WTC11 (cell line): ENCODE measurements at regions of chr14 and their contacts with region 1.

Region 1: GRCh38 chr14:35404449-35405303 is at the start of gene NFKBIA:
- DNase-seq: peak; percentile 82
- ATAC-seq: peak; percentile 73
- H3K4me3 Mint-ChIP-seq: peak within 1 kb of the TSS; percentile 88
- H3K27ac Mint-ChIP-seq: peak within 1 kb of the TSS; percentile 93
- H3K4me1 Mint-ChIP-seq: peaks cover 34% of the 10 kb centered on the region
- H3K27me3 Mint-ChIP-seq: no peaks in the 10 kb centered on the region
- CTCF ChIP-seq: no peak
- total RNA-seq, gene NFKBIA: 29.3 to 32.1 TPM (median 31.3 TPM) in 3 replicates

Region 2: DNA sequence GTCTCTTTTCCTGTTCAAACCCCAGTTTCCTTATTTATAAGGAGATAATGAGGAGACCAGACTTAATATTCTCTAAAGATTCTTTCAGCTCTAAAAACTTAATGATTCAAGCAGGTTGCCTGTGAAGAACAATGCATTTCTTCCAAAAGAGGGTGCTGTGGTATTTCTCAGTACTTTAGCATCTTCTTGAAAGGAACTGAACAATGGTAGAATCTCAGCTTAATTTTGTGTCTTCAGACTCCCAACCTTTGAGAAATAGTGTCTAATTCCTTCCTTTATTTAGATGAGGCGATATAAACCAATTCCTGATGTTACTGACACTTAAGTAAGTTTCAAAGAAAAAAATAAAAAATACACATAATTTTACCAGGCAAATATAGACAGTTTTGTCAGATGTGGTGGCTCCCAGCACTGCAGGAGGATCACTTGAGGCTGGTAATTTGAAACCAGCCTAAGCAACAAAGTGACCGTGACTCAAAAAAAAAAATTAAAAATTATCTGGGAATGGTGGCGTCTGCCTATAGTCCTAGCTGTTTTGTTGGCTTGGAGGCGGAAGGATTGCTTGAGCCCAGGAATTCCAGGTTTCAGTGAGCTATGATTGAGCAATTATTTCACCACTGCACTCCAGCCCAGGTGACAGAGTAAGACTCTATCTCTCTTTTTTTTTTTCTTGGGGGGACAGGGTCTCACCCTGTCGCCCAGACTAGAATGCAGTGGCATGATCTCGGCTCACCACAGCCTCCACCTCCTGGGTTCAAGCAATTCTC is 189.4 kb before region 1 on chr14:
- CTCF ChIA-PET with region 1: interaction called, 10 read pairs
- POLR2A ChIA-PET with region 1: interaction called, 3 read pairs
- DNase-seq: no peak
- ATAC-seq: peak; percentile 66
- H3K4me3 Mint-ChIP-seq: no peak overlapping the region
- H3K27ac Mint-ChIP-seq: peak overlapping the region; percentile 71
- H3K4me1 Mint-ChIP-seq: peaks cover 9% of the 10 kb centered on the region
- H3K27me3 Mint-ChIP-seq: no peaks in the 10 kb centered on the region
- CTCF ChIP-seq: no peak

Region 3: GRCh38 chr14:35292051-35292769 is 112.5 kb before region 1 on chr14 and contains the start of gene PSMA6:
- CTCF ChIA-PET with region 1: interaction called, 20 read pairs
- POLR2A ChIA-PET with region 1: interaction called, 19 read pairs
- DNase-seq: peak; percentile 99
- ATAC-seq: peak; percentile 97
- H3K4me3 Mint-ChIP-seq: peak within 1 kb of the TSS; percentile 100
- H3K27ac Mint-ChIP-seq: peak within 1 kb of the TSS; percentile 98
- H3K4me1 Mint-ChIP-seq: peaks cover 23% of the 10 kb centered on the region
- H3K27me3 Mint-ChIP-seq: no peaks in the 10 kb centered on the region
- CTCF ChIP-seq: no peak
- total RNA-seq, gene PSMA6: 197 to 215 TPM (median 210 TPM) in 3 replicates

Region 4: DNA sequence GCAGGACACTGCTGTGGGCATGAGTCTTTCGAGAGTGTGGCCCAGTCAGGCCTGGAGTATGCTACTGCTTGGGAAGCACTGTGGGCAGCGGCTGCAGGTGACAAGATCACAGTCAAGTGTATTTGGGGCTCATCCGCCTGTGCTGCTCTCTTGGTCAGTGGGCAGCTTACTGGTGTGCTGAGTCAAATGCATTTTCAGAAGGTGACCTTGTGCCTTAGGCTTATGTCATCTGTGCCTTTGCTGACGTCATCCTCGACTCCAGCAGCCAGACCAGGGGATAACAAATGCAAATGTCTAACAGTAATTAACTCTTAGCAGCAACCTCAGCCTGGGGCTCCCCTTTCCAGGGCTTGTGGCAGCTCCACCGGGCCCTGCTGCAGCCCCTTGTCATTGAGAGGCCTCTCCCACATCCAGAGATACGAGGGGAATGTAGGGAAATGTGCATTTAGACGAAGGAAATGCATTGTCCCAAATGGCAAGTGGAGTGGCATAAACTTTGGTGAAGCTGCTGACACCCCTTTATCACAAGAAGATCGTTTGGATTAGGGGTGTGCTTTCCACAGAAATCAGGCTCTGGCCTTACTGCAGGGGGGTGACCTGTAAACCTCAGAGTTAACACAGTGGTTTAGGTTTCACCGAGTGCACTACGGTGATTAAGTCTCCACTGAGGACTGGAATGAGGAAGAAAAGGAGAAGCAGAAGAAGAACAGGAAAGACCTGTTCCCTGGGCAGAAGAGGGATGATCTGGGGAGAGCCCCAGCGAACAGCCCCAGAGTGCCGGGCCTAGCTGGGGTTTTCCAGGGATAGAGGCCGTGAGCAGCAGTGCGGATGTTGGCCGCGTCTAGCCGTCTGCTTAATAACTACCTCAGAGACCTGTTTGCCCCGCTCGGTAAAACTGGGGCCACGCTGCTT is 72.8 kb before region 1 on chr14:
- CTCF ChIA-PET with region 1: interaction called, 10 read pairs
- POLR2A ChIA-PET with region 1: interaction called, 7 read pairs
- DNase-seq: no peak
- ATAC-seq: peak; percentile 16
- H3K4me3 Mint-ChIP-seq: no peak overlapping the region
- H3K27ac Mint-ChIP-seq: peak overlapping the region; percentile 84; the same call in 1 of the 2 replicates
- H3K4me1 Mint-ChIP-seq: peaks cover 42% of the 10 kb centered on the region
- H3K27me3 Mint-ChIP-seq: no peaks in the 10 kb centered on the region
- CTCF ChIP-seq: no peak

Region 5: DNA sequence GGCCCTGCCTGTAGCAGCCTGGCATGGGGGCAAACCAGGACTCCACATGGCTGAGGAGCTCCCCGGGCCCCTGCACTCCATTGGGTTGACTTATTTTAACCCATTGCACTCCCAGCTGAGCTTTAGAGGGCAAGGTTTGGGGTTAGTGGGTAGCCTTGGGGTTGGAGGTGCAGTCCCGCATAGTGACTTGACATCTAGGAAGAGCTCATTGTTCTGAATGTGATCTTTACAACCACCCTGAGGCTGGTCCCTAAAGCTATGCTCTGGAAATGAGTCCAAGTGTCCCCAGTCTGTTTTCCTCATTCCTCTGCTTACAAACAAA is 36.6 kb before region 1 on chr14:
- CTCF ChIA-PET with region 1: interaction called, 9 read pairs
- POLR2A ChIA-PET with region 1: interaction called, 10 read pairs
- DNase-seq: no peak
- ATAC-seq: peak; percentile 10; the same call in 1 of the 2 replicates
- H3K4me3 Mint-ChIP-seq: no peak overlapping the region
- H3K27ac Mint-ChIP-seq: no peak overlapping the region
- H3K4me1 Mint-ChIP-seq: peaks cover 22% of the 10 kb centered on the region
- H3K27me3 Mint-ChIP-seq: peaks cover 4% of the 10 kb centered on the region; the same call in 1 of the 2 replicates
- CTCF ChIP-seq: no peak

Region 6: DNA sequence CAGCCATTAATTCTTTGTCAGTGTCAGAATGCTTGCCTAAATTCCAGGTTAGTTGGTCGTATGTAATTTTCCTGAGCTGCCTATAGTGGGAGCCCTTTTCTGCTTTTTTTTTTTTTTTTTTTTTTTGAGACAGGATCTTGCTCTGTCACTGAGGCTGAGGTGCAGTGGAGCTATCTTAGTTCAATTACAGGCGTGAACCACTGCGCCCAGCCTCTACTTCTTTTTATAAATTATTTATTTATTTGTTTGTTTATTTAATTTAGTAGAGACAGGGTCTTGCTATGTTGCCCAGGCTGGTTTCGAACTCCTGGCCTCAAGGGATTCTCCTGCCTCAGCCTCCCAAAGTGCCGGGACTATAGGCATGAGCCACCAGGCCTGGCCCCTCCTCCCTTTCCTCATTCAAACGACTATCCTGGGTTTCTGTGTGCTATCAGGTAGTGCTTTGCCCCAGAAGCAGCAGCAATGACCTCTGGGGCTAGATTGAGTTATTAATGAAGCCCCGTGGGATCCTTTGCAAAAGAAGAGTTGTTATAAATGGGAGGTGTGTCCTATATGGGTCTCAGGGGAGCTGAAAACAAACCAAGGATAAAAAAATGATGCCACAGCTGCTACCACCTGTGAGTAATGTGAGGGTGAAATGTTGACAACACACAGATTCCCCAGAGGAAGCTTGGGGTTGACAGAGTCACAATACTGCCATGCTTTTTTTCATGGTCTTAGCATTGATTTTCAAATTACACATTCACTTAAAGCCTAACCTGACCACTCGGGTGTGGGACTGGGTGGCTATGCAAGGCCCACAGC is 34.4 kb after region 1 on chr14:
- CTCF ChIA-PET with region 1: no interaction called
- POLR2A ChIA-PET with region 1: no interaction called
- DNase-seq: no peak
- ATAC-seq: peak; percentile 91
- H3K4me3 Mint-ChIP-seq: no peak overlapping the region
- H3K27ac Mint-ChIP-seq: no peak overlapping the region
- H3K4me1 Mint-ChIP-seq: no peaks in the 10 kb centered on the region
- H3K27me3 Mint-ChIP-seq: no peaks in the 10 kb centered on the region
- CTCF ChIP-seq: peak; percentile 52; the same call in 1 of the 2 replicates

Region 7: DNA sequence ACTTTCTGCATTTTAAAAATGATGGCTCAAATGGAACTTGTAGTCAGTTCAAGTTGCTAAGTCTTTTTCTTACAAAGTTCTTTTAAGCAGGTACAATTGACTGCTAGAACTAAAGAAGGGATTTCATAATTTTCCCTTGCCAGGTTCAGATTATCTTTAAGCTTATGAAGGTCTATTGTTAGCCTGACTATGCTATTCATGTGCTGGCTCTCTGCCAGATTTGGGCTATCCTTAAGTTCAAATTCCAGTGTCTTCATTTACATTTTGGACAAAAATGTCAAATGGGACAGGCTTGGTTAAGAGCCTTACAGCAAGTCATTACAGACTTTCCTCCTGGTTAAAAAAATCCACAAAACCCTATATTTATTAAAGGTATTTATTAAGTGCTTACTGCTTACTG is 171.6 kb after region 1 on chr14:
- CTCF ChIA-PET with region 1: no interaction called
- POLR2A ChIA-PET with region 1: no interaction called
- DNase-seq: no peak
- ATAC-seq: no peak
- H3K4me3 Mint-ChIP-seq: no peak overlapping the region
- H3K27ac Mint-ChIP-seq: no peak overlapping the region
- H3K4me1 Mint-ChIP-seq: no peaks in the 10 kb centered on the region
- H3K27me3 Mint-ChIP-seq: no peaks in the 10 kb centered on the region
- CTCF ChIP-seq: no peak